Activated CD4-positive, alpha-beta T cell treated with anti-CD3 and anti-CD28 coated beads, Interleukin-2, amount 10 ng/mL, durations not matched to agents 24 days and 14 days (primary cell): ENCODE measurements at regions of chr1 and their contacts with region 1.

Region 1: DNA sequence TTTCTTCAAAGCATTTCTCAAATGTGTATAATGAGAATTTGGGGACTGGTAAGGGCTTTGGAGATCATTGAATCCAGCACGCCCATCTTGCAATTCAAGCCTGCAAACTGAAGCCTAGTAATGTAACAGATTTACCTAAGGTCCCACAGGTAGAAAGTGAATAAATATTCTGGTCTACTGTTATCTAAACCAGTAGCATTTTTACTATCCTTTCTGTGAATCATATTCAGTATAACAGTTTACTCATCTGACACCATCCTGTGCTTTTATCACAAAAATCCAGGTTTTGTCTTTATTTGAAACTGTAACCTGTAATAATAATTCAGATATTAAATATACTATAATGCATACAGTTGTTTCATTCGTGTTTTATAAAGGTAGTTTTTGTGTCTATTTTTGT is 17.4 kb downstream of the KCNA3 start:
- DNase-seq: no peak
- H3K4me3 Mint-ChIP-seq: no peak overlapping the region
- H3K27ac Mint-ChIP-seq: no peak overlapping the region
- H3K4me1 Mint-ChIP-seq: peaks cover 26% of the 10 kb centered on the region
- H3K27me3 Mint-ChIP-seq: no peaks in the 10 kb centered on the region

Region 2: DNA sequence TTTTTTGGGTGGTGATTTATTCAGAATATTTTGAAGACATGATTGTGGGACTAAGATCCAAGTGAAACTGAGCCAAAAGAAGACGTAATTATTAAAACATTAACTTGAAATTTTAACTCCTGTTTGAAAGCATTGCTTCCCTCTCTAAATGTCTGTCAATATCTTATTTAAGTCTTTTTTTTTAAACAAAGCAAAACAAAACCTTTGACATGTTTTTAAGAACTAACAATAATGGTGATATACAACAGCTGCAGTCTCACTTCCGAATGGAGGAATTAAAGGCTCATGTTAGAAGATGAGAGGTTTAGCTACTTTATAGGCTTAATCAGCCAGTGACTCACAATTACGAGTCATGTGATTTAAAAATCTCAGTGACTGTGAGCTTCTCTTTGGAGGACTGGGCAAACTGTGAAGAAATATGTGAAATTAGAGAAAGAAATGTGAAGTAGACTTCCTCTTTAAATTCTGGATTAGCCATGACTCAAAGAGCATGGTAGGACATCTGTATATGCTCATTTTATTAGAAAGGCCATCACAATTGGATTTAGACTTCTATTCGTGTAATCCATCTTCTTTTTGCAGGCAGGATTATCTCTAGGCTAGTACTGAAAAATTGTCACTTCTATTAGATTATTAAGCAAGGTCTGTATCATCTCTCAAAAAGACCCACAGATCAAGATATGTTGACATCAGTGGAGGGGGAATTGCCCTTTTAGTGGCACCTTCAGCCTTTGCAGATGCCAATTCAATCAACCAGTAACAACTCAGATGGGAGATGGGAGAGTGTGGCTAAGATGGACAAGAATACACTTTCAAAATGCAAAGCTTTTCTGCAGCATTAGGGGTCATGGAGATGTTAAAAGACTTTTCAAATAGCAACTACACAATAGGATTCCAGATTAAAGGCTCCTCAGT is 11.3 kb before region 1 on chr1:
- intact Hi-C with region 1: loop called (anchors 1 kb)
- DNase-seq: peak; percentile 58
- H3K4me3 Mint-ChIP-seq: peak overlapping the region; percentile 36
- H3K27ac Mint-ChIP-seq: peak overlapping the region; percentile 71
- H3K4me1 Mint-ChIP-seq: peaks cover 45% of the 10 kb centered on the region
- H3K27me3 Mint-ChIP-seq: no peaks in the 10 kb centered on the region

Region 3: DNA sequence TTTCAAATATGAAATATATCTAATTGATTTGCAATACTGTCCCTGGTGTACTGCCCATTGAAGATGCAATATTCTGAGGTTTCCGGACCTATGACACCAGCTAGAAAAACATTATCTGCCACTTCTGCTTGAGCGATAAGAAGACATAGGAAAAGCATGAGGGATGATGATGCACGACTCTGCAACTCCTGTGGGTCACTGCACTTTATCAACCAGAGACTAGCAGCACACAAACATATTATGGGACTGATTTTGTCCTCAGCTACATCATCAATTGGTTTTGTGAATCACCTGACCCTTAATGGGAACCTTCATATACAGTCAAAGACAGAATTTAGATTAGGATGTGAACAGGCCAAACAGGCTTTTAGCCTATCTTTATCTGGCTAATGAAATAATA is 31.2 kb after region 1 on chr1:
- intact Hi-C with region 1: loop called (anchors 1 kb)
- DNase-seq: no peak
- H3K4me3 Mint-ChIP-seq: no peak overlapping the region
- H3K27ac Mint-ChIP-seq: no peak overlapping the region
- H3K4me1 Mint-ChIP-seq: peaks cover 6% of the 10 kb centered on the region
- H3K27me3 Mint-ChIP-seq: peaks cover 10% of the 10 kb centered on the region